Colonic mucosa (tissue), 4 donors: ENCODE measurements at regions of chr18 and their contacts with region 1.

Region 1: GRCh38 chr18:22348521-22349316 is 69.0 kb downstream of the CTAGE1 start:
- DNase-seq: peak; percentile 74
- H3K4me3 ChIP-seq: peak overlapping the region; percentile 45
- H3K27ac ChIP-seq: peak overlapping the region; percentile 78
- H3K4me1 ChIP-seq: no peaks in the 10 kb centered on the region
- H3K27me3 ChIP-seq: no peaks in the 10 kb centered on the region
- CTCF ChIP-seq: no peak

Region 2: GRCh38 chr18:22241921-22242361 is 106.8 kb before region 1 on chr18:
- intact Hi-C with region 1: loop called (anchors 10 kb)
- DNase-seq: peak; percentile 58
- H3K4me3 ChIP-seq: no peak overlapping the region
- H3K27ac ChIP-seq: peak overlapping the region; percentile 84
- H3K4me1 ChIP-seq: peaks cover 16% of the 10 kb centered on the region
- H3K27me3 ChIP-seq: no peaks in the 10 kb centered on the region
- CTCF ChIP-seq: no peak

Region 3: GRCh38 chr18:22300665-22301636 is 47.8 kb before region 1 on chr18:
- intact Hi-C with region 1: loop called (anchors 5 kb)
- DNase-seq: peak; percentile 56
- H3K4me3 ChIP-seq: no peak overlapping the region
- H3K27ac ChIP-seq: no peak overlapping the region
- H3K4me1 ChIP-seq: no peaks in the 10 kb centered on the region
- H3K27me3 ChIP-seq: no peaks in the 10 kb centered on the region
- CTCF ChIP-seq: no peak

Region 4: DNA sequence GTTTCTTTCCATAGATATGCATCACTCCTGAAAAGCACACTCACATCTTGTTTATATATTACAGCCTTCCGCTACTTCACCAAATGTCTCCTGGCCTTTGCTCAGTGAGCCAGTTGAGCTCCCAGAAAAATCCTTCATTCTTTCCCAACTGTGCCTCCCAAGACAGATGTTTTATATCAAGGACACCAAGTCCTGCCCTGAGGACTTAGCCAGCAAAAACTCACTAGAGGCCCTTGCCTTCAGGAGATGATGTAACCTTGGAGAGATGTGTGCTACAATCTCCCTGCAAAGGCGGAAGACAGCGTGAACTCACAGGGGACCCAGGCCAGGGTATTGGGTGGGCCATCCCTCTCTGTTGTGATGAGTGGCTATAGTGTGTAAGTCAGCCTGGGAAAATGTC is 155.1 kb after region 1 on chr18:
- intact Hi-C with region 1: no loop called
- DNase-seq: no peak
- H3K4me3 ChIP-seq: no peak overlapping the region
- H3K27ac ChIP-seq: peak overlapping the region; percentile 14
- H3K4me1 ChIP-seq: no peaks in the 10 kb centered on the region
- H3K27me3 ChIP-seq: no peaks in the 10 kb centered on the region
- CTCF ChIP-seq: no peak